Activated CD4-positive, alpha-beta T cell treated with anti-CD3 and anti-CD28 coated beads, Interleukin-2, amount 10 ng/mL, durations not matched to agents 7 days and 5 days (primary cell): ENCODE measurements at regions of chr10 and their contacts with region 1.

Region 1: GRCh38 chr10:6473901-6474370 is 106.1 kb downstream of the PRKCQ start:
- DNase-seq: peak; percentile 67
- H3K4me3 Mint-ChIP-seq: peak overlapping the region; percentile 79
- H3K27ac Mint-ChIP-seq: peak overlapping the region; percentile 95
- H3K4me1 Mint-ChIP-seq: peaks cover 66% of the 10 kb centered on the region
- H3K27me3 Mint-ChIP-seq: no peaks in the 10 kb centered on the region

Region 2: DNA sequence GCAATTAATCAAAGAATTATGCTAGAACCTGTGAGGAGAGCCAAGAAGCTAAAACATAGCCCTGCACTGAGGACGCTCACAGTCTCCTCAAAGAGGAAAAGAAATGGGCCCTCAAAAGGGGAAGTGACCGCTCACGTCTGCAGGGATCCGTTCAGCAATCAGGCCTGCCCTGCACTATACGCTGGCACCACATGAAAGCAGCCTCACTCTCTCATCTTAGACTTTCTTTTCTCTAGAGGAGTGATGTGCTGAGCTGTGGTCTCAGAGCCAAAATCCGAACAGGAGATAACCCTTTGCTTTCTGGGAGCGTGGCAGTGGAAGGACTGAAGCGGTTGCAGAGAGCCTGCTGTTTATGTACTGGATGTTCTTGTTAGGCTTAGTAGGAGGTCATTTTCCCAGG is 405.5 kb before region 1 on chr10:
- CTCF ChIA-PET with region 1: no interaction called
- POLR2A ChIA-PET with region 1: no interaction called
- DNase-seq: peak; percentile 79
- H3K4me3 Mint-ChIP-seq: peak overlapping the region; percentile 71
- H3K27ac Mint-ChIP-seq: peak overlapping the region; percentile 97
- H3K4me1 Mint-ChIP-seq: peaks cover 94% of the 10 kb centered on the region
- H3K27me3 Mint-ChIP-seq: no peaks in the 10 kb centered on the region

Region 3: DNA sequence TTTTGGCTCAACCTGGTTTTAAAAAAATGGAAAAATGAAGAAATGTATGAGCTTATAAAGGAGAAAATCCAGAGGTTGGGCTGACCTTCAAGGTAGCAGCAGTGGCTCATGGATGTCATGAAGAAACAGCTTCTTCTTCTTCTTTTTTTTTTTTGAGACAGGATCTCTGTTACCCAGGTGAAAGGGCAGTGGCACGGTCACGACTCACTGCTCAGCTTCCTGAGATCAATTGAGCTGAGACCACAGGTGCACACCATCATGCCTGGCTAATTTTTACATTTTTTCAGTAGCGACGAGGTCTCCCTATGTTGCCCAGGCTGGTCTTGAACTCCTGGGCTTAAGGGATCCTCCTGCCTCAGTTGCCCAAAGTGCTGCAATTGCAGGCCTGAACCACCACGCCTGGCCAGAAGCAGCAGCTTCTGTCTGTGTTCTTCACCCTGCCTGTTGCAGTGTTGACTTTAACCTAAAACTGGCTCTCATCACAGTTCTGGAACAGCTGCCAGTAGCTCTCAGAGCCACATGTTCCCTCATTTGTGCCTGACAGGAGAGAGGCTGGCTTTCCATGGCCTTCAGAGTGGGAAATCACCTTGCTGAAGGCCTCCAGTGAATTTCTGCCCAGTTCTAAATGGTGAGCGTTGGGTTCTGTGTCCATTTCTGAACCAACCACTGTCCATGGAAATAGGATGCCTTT is 153.5 kb before region 1 on chr10:
- CTCF ChIA-PET with region 1: no interaction called
- POLR2A ChIA-PET with region 1: no interaction called
- DNase-seq: no peak
- H3K4me3 Mint-ChIP-seq: no peak overlapping the region
- H3K27ac Mint-ChIP-seq: no peak overlapping the region
- H3K4me1 Mint-ChIP-seq: peaks cover 5% of the 10 kb centered on the region
- H3K27me3 Mint-ChIP-seq: no peaks in the 10 kb centered on the region

Region 4: GRCh38 chr10:6445501-6446316 is 28.2 kb before region 1 on chr10:
- CTCF ChIA-PET with region 1: interaction called, 10 read pairs
- POLR2A ChIA-PET with region 1: no interaction called
- DNase-seq: peak; percentile 74
- H3K4me3 Mint-ChIP-seq: no peak overlapping the region
- H3K27ac Mint-ChIP-seq: peak overlapping the region; percentile 11
- H3K4me1 Mint-ChIP-seq: peaks cover 47% of the 10 kb centered on the region
- H3K27me3 Mint-ChIP-seq: no peaks in the 10 kb centered on the region

Region 5: DNA sequence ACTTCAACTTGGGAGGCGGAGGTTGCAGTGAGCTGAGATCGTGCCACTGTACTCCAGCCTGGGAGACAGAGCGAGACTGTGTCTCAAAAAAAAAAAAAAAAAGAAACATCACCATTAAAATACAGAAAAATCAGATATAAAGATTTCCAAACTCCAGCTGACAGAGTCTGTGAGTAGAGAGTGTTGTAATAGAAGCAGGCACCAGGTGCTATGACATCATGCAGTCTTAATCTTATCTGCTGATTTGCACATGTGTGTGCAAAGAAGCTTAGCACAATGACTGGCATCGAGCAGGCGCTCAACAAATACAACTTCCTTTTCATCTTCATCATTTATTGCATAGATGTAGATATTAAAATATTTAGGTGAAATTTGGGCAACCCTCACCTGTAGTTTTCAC is 14.0 kb after region 1 on chr10:
- CTCF ChIA-PET with region 1: interaction called, 21 read pairs
- POLR2A ChIA-PET with region 1: no interaction called
- DNase-seq: no peak
- H3K4me3 Mint-ChIP-seq: no peak overlapping the region
- H3K27ac Mint-ChIP-seq: no peak overlapping the region
- H3K4me1 Mint-ChIP-seq: peaks cover 69% of the 10 kb centered on the region
- H3K27me3 Mint-ChIP-seq: no peaks in the 10 kb centered on the region